WTC11 (cell line): ENCODE measurements at regions of chr3 and their contacts with region 1.

Region 1: GRCh38 chr3:132416807-132417694 is at the start of gene DNAJC13:
- DNase-seq: peak; percentile 89
- ATAC-seq: peak; percentile 91
- H3K4me3 Mint-ChIP-seq: peak within 1 kb of the TSS; percentile 100
- H3K27ac Mint-ChIP-seq: peak within 1 kb of the TSS; percentile 99
- H3K4me1 Mint-ChIP-seq: peaks cover 14% of the 10 kb centered on the region
- H3K27me3 Mint-ChIP-seq: peaks cover 21% of the 10 kb centered on the region
- CTCF ChIP-seq: no peak
- total RNA-seq, gene DNAJC13: 23.8 to 28.5 TPM (median 25.0 TPM) in 3 replicates

Region 2: DNA sequence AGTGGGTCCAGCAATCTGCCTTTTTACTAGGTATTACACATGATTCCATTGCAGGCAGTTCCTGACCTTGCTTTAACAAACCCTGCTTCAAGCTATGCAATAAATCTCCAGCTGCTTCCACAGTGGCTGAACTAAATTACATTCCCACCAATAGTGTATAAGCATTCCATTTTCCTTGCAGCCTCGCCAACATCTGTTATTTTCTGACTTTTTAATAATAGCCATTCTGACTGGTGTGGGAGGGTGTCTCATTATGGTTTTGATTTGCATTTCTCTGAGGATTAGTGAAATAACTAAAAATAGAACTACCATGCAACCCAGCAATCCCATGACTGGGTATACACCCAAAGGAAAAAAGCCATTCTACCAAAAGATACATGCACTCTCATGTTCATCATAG is 36.1 kb before region 1 on chr3:
- CTCF ChIA-PET with region 1: interaction called, 3 read pairs
- POLR2A ChIA-PET with region 1: interaction called, 12 read pairs
- DNase-seq: no peak
- ATAC-seq: no peak
- H3K4me3 Mint-ChIP-seq: no peak overlapping the region
- H3K27ac Mint-ChIP-seq: peak overlapping the region; percentile 100
- H3K4me1 Mint-ChIP-seq: peaks cover 65% of the 10 kb centered on the region
- H3K27me3 Mint-ChIP-seq: no peaks in the 10 kb centered on the region; the same call in 1 of the 2 replicates
- CTCF ChIP-seq: no peak